ENCODE measurements at regions of chr1 and their contacts with region 1.

Region 1: GRCh38 chr1:15214527-15214926 is 32.5 kb upstream of the FHAD1 start:
- DNase-seq: peak; percentile 67 to 78
- ATAC-seq: peak; percentile 37
- H3K4me3 ChIP-seq: no peak overlapping the region
- H3K27ac ChIP-seq: peak overlapping the region in 1 of 2 donors; percentile 48
- H3K4me1 ChIP-seq: peaks cover 0 to 7% of the 10 kb centered on the region in 2 donors
- H3K27me3 ChIP-seq: no peaks in the 10 kb centered on the region

Region 2: DNA sequence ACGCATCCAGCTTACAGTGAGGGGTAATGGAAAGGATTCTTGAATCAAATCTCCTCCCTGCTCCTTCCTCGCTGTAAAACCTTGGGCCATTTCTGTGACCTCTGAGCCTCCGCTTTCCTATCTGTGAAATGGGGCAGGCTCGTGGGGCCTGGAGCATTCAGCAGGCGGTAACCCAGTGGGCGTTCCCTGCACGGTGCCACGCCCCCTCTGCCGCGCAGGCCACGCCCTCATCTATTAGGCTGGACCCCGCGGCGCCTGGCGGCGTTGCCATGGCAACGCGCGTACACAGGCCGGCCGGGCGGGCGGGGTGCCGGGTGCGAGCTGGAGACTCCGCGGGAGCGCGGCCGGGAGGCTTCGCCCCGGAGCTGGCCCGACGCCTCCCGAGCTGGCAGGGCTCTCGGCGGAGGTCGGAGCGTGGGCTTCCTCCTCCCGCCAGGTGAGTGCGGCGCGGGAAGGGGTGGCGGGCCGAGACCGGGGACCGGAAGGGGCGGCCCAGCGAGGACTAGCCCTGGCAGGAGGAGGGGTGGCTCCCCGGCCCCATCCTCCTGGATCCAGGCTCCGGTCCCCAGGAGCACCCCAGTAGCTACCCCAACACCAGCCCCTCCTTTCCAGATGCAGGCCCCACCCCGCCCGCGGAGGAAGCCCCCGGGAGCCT is 32.6 kb after region 1 on chr1 and contains the start of gene FHAD1:
- intact Hi-C with region 1: loop called in 1 of 2 experiments (anchors 5 kb)
- DNase-seq: peak; percentile 76 to 87
- ATAC-seq: peak; percentile 61
- H3K4me3 ChIP-seq: peak within 1 kb of the TSS in 1 of 2 donors; percentile 35
- H3K27ac ChIP-seq: no peak within 1 kb of the TSS
- H3K4me1 ChIP-seq: no peaks in the 10 kb centered on the region
- H3K27me3 ChIP-seq: no peaks in the 10 kb centered on the region
- total RNA-seq, gene FHAD1: 0.32 to 2.7 TPM

Region 3: GRCh38 chr1:15323351-15323988 is 108.9 kb after region 1 on chr1:
- intact Hi-C with region 1: no loop called
- DNase-seq: peak; percentile 85 to 89
- ATAC-seq: peak; percentile 91
- H3K4me3 ChIP-seq: no peak overlapping the region
- H3K27ac ChIP-seq: no peak overlapping the region
- H3K4me1 ChIP-seq: no peaks in the 10 kb centered on the region
- H3K27me3 ChIP-seq: no peaks in the 10 kb centered on the region

Measured in aorta (tissue), 5 donors.